Posterior vena cava (tissue), 2 donors: ENCODE measurements at regions of chr2 and their contacts with region 1.

Region 1: GRCh38 chr2:43676322-43677050 is at the start of gene C1GALT1C1L:
- DNase-seq: peak; percentile 85
- total RNA-seq, gene C1GALT1C1L: 1.3 to 1.4 TPM

Region 2: DNA sequence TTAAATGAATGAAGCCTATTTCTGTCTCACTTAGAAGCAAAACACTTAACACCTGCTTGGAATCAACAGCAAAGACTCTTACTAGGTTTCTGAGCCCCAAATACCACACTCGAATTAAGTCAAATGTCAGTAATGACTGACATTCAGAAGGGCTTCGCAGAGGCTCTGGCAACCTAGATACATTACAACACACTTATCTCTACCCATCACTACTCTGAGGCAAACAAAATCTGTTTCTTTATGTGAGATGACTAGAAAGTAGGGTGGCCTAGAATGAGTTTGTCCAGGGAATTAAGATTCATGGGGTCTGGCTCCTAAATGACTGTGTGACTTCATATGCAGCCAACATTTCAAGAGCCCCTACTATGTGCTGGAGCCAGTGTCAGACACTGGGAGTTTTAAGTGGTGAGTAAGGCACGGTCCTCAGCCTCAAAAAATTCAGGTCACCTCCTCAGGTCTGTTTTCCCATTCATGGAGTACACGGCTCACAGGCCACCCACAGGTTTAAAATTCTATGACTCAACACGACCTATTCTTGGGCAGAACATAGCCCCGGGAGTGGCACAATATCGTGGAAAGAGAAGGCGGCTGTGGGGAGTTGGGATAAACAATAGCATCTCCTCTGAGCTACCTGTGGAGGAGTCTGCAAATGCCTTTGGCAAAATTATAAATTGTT is 299.8 kb before region 1 on chr2:
- intact Hi-C with region 1: loop called in 1 of 2 experiments (anchors 5 kb)
- DNase-seq: no peak

Region 3: GRCh38 chr2:43611987-43612894 is 64.2 kb before region 1 on chr2:
- intact Hi-C with region 1: loop called in 1 of 2 experiments (anchors 10 kb)
- DNase-seq: no peak

Region 4: DNA sequence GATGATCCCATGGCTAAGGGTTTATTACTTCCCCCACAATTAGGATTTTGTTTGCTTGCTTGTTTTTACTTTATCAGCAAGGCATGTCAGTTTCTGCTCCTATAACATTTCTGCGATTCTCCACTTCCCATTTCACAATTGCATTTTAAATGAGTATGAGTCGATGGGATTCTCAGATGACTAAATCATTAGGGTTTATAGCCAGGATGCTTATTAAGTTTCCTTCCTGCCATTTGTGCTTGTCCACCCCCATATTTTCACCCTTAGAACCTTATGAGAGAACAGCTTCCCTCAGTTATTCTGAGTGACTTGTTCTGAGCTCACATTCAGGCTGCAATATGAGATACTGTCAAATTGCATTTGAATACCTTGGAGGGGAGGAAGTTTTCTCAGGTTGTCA is 37.7 kb after region 1 on chr2:
- intact Hi-C with region 1: no loop called
- DNase-seq: no peak

Region 5: DNA sequence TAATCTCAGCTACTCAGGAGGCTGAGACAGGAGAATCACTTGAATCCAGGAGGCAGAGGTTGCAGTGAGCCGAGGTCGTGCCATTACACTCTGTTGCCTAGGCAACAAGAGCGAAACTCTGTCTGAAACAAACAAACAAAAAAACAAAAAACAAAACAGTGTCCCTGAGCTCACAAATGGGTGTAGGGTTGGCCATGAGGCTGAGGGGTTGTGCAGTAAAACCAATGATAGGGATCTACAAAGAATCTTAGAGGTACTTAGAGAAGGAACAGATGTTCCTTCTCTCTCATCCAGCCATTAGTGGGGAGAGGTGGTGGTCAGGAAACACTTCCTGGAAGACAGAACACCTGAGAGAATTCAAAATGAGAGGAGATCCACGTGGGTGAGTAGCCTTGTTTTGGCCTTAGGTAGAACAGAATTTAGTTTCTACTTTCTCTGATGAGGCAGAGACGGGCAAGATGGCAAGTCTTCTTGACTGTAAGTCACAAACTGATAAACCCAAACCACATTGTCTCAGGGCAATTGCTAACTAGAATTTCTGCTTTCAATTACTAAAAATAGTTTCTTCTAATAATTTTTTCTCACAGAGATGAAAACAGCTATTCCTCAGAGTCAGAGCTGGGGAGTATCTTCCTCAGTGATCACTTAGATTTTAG is 430.7 kb after region 1 on chr2:
- intact Hi-C with region 1: no loop called
- DNase-seq: no peak